ENCODE measurements at regions of chr12 and their contacts with region 1.

Region 1: DNA sequence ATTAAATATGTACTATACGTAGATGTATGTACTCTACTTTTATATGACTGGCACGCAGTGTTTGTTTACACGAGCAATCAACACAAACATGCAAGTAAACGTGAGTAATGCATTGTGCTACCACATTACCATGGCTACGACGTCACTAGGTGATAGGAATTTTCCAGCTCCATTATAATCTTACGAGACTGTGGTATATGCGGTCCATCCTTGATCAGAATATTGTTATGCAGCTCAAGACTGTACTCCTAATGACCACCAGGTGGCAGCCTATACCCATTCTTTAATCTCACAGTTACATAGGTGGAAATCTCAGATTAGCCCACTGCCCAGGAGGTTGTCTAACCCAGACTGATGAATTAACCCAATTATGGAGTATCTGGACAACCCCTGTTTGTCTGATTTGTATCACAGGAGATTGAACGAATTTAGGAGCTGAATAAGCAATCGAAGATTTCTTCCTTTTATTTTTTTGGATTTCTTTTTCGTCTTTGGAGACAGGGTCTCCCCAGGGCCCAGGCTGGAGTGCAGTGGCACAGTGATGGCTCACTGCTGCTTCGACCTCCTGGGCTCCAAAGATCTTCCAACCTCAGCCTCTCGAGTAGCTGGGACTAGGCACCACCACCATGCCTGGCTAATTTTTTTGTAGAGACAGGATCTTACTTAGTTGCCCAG is 8.7 kb upstream of the TESPA1 start:
- DNase-seq: peak; percentile 72
- H3K4me3 Mint-ChIP-seq: no peak overlapping the region
- H3K27ac Mint-ChIP-seq: no peak overlapping the region
- H3K4me1 Mint-ChIP-seq: peaks cover 41% of the 10 kb centered on the region
- H3K27me3 Mint-ChIP-seq: no peaks in the 10 kb centered on the region

Region 2: GRCh38 chr12:54701940-54702592 is 291.2 kb before region 1 on chr12:
- CTCF ChIA-PET with region 1: interaction called, 14 read pairs
- intact Hi-C with region 1: loop called (anchors 1 kb)
- DNase-seq: no peak
- H3K4me3 Mint-ChIP-seq: no peak overlapping the region
- H3K27ac Mint-ChIP-seq: no peak overlapping the region
- H3K4me1 Mint-ChIP-seq: no peaks in the 10 kb centered on the region
- H3K27me3 Mint-ChIP-seq: no peaks in the 10 kb centered on the region

Region 3: DNA sequence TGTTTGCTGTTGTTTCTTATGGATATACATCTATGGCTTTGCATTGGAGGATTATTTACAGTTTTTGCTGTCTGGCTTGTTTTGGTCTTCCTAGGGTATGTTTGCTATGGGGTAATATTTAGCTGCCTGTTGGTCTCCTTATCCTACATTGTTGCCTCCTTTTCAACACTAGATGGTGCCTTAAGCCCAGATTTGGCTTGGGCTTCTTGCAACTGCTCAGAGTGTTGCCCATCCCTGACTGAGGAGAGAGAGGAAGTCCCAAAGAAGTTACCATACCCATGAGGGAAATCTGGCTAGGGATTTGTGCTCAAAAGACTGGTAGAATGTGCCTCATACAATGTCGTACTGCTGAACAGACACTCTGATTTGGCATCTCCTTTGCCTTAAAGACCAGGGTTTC is 233.5 kb before region 1 on chr12:
- CTCF ChIA-PET with region 1: interaction called, 12 read pairs
- intact Hi-C with region 1: no loop called
- DNase-seq: peak; percentile 38
- H3K4me3 Mint-ChIP-seq: no peak overlapping the region
- H3K27ac Mint-ChIP-seq: no peak overlapping the region
- H3K4me1 Mint-ChIP-seq: peaks cover 19% of the 10 kb centered on the region
- H3K27me3 Mint-ChIP-seq: no peaks in the 10 kb centered on the region

Region 4: GRCh38 chr12:54958048-54958658 is 35.1 kb before region 1 on chr12:
- CTCF ChIA-PET with region 1: interaction called, 44 read pairs
- intact Hi-C with region 1: no loop called
- DNase-seq: peak; percentile 75
- H3K4me3 Mint-ChIP-seq: no peak overlapping the region
- H3K27ac Mint-ChIP-seq: peak overlapping the region; percentile 76
- H3K4me1 Mint-ChIP-seq: peaks cover 88% of the 10 kb centered on the region
- H3K27me3 Mint-ChIP-seq: no peaks in the 10 kb centered on the region

Region 5: GRCh38 chr12:55008944-55009585 is 15.8 kb after region 1 on chr12:
- CTCF ChIA-PET with region 1: interaction called, 16 read pairs
- intact Hi-C with region 1: no loop called
- DNase-seq: no peak
- H3K4me3 Mint-ChIP-seq: no peak overlapping the region
- H3K27ac Mint-ChIP-seq: no peak overlapping the region
- H3K4me1 Mint-ChIP-seq: no peaks in the 10 kb centered on the region
- H3K27me3 Mint-ChIP-seq: no peaks in the 10 kb centered on the region

Region 6: GRCh38 chr12:55142669-55143565 is 149.6 kb after region 1 on chr12:
- CTCF ChIA-PET with region 1: interaction called, 9 read pairs
- intact Hi-C with region 1: loop called (anchors 2 kb)
- DNase-seq: peak; percentile 70
- H3K4me3 Mint-ChIP-seq: no peak overlapping the region
- H3K27ac Mint-ChIP-seq: no peak overlapping the region
- H3K4me1 Mint-ChIP-seq: no peaks in the 10 kb centered on the region
- H3K27me3 Mint-ChIP-seq: no peaks in the 10 kb centered on the region

Measured in activated naive CD4-positive, alpha-beta T cell treated with anti-CD3 and anti-CD28 coated beads for 36 hours (primary cell).